CD4-positive, alpha-beta T cell (primary cell): ENCODE measurements at regions of chr13 and their contacts with region 1.

Region 1: GRCh38 chr13:28138012-28138755 is at the start of gene PAN3:
- DNase-seq: peak; percentile 85 to 97 (median 91)
- ATAC-seq: peak; percentile 50
- H3K4me3 ChIP-seq: peak within 1 kb of the TSS; percentile 81
- H3K4me3 Mint-ChIP-seq: peak within 1 kb of the TSS; percentile 95
- H3K27ac ChIP-seq: peak within 1 kb of the TSS; percentile 93 to 99
- H3K27ac Mint-ChIP-seq: peak within 1 kb of the TSS; percentile 99
- H3K4me1 ChIP-seq: peaks cover 37% of the 10 kb centered on the region
- H3K4me1 Mint-ChIP-seq: peaks cover 53% of the 10 kb centered on the region
- H3K27me3 ChIP-seq: no peaks in the 10 kb centered on the region
- H3K27me3 Mint-ChIP-seq: no peaks in the 10 kb centered on the region
- CTCF ChIP-seq: no peak
- total RNA-seq, gene PAN3: 56.9 to 59.5 TPM

Region 2: DNA sequence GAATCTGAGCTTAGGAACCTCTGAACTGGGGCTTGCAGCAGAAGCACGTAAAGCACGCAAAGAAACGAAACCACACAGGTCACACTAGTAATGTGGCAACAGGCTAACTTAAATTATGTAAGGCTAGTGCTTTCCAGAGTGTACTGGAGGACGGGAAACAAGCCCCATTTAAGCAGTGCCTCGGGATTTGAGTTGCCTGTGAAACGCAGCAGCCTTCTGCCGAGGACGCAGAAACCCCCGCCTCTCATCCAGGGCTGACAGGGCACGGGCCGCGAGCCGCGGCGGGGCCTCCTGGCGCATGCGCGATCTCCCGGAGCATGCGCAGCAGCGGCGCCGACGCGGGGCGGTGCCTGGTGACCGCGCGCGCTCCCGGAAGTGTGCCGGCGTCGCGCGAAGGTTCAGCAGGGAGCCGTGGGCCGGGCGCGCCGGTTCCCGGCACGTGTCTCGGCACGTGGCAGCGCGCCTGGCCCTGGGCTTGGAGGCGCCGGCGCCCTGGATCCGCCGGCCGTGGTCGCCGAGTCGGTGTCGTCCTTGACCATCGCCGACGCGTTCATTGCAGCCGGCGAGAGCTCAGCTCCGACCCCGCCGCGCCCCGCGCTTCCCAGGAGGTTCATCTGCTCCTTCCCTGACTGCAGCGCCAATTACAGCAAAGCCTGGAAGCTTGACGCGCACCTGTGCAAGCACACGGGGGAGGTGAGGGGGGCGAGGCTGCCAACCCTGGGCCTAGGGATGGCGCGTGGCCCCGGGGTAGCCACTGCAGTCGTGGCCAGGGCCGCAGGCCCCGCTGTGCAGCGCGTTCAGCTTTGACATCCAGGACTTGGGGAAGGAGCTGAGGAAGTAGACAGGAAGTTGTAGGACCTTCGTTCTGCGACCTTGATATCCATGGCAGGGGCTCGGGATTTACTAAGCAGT is 713.7 kb before region 1 on chr13 and contains the start of gene GTF3A:
- CTCF ChIA-PET with region 1: no interaction called
- POLR2A ChIA-PET with region 1: interaction called, 4 read pairs
- intact Hi-C with region 1: loop called in 1 of 2 experiments (anchors 10 kb)
- DNase-seq: peak; percentile 69 to 97 (median 87)
- ATAC-seq: peak; percentile 53
- H3K4me3 ChIP-seq: peak within 1 kb of the TSS; percentile 79
- H3K4me3 Mint-ChIP-seq: peak within 1 kb of the TSS; percentile 90
- H3K27ac ChIP-seq: peak within 1 kb of the TSS; percentile 91 to 95
- H3K27ac Mint-ChIP-seq: peak within 1 kb of the TSS; percentile 95
- H3K4me1 ChIP-seq: peaks cover 50% of the 10 kb centered on the region
- H3K4me1 Mint-ChIP-seq: peaks cover 39% of the 10 kb centered on the region
- H3K27me3 ChIP-seq: no peaks in the 10 kb centered on the region
- H3K27me3 Mint-ChIP-seq: no peaks in the 10 kb centered on the region
- CTCF ChIP-seq: no peak
- total RNA-seq, gene GTF3A: 129 to 132 TPM

Region 3: GRCh38 chr13:28179974-28180373 is 41.8 kb after region 1 on chr13:
- CTCF ChIA-PET with region 1: no interaction called
- POLR2A ChIA-PET with region 1: interaction called, 4 read pairs
- intact Hi-C with region 1: loop called (anchors 5 kb)
- DNase-seq: no peak
- ATAC-seq: no peak
- H3K4me3 ChIP-seq: no peak overlapping the region
- H3K4me3 Mint-ChIP-seq: no peak overlapping the region
- H3K27ac ChIP-seq: no peak overlapping the region
- H3K27ac Mint-ChIP-seq: peak overlapping the region; percentile 11
- H3K4me1 ChIP-seq: no peaks in the 10 kb centered on the region
- H3K4me1 Mint-ChIP-seq: peaks cover 52% of the 10 kb centered on the region
- H3K27me3 ChIP-seq: no peaks in the 10 kb centered on the region
- H3K27me3 Mint-ChIP-seq: no peaks in the 10 kb centered on the region
- CTCF ChIP-seq: no peak

Region 4: DNA sequence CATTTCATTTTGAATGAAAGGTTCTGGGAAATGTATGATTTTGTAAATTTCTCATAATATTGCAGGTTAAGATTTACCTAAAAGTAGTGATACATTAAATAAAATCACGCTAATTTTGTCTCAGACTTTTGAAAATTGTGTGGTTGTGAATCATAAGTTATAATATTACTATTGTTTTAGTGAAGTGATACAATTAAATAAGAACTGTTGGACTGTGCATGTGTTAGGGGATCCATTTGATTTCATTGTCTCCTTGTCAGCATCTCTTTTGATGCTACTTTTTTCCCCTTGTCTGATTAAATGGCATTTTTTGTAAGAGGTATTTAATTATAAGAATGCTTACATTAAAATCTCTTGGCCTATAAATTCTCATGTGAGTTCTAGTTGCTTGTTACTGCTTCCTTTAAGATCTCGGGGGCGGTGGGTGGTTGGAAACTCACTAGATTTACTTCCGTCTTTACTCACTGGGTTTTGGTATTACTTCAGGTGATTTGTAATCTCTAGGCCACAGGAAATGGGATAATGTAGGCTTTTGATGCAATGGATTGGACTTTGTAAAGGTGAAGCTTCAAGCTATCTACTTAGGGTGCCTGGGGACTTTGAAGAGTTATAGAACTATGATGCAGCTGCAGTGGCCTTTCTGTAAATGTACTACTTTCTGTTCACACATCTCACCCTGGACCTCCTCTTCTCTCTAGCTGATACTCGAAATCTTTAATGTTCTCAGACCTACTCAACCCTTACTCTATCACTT is 66.7 kb after region 1 on chr13:
- CTCF ChIA-PET with region 1: no interaction called
- POLR2A ChIA-PET with region 1: interaction called, 3 read pairs
- intact Hi-C with region 1: loop called in 1 of 2 experiments (anchors 5 kb)
- DNase-seq: no peak
- ATAC-seq: no peak
- H3K4me3 ChIP-seq: no peak overlapping the region
- H3K4me3 Mint-ChIP-seq: no peak overlapping the region
- H3K27ac ChIP-seq: no peak overlapping the region
- H3K27ac Mint-ChIP-seq: no peak overlapping the region
- H3K4me1 ChIP-seq: peaks cover 13% of the 10 kb centered on the region
- H3K4me1 Mint-ChIP-seq: peaks cover 45% of the 10 kb centered on the region
- H3K27me3 ChIP-seq: no peaks in the 10 kb centered on the region
- H3K27me3 Mint-ChIP-seq: no peaks in the 10 kb centered on the region
- CTCF ChIP-seq: no peak

Region 5: DNA sequence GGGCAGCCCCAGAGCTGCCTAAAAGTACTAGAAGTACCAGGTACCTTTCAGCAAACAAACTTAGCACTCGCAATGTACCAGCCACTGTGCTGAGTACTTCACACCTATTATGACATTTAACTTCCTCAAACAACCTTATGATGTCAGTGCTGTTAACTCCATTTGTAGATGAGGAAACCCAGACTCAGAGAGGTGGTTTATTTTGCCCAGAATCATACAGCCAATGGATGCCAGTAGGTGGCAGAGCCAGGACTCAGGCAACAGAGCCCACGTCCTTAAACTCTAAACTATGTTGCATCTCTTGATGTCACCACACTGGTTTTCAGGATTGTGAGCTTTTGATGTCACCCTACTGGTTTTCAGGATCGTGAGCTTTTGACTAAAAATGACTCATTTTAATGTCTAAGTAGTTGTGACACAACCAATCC is 277.8 kb after region 1 on chr13:
- CTCF ChIA-PET with region 1: no interaction called
- POLR2A ChIA-PET with region 1: no interaction called
- intact Hi-C with region 1: no loop called
- DNase-seq: peak in 2 of 14 experiments; percentile 28 to 45
- ATAC-seq: no peak
- H3K4me3 ChIP-seq: no peak overlapping the region
- H3K4me3 Mint-ChIP-seq: no peak overlapping the region
- H3K27ac ChIP-seq: no peak overlapping the region
- H3K27ac Mint-ChIP-seq: no peak overlapping the region
- H3K4me1 ChIP-seq: no peaks in the 10 kb centered on the region
- H3K4me1 Mint-ChIP-seq: no peaks in the 10 kb centered on the region
- H3K27me3 ChIP-seq: no peaks in the 10 kb centered on the region
- H3K27me3 Mint-ChIP-seq: no peaks in the 10 kb centered on the region
- CTCF ChIP-seq: no peak

Region 6: GRCh38 chr13:28658796-28659620 is 520.8 kb after region 1 on chr13 and contains the start of gene POMP:
- CTCF ChIA-PET with region 1: no interaction called
- POLR2A ChIA-PET with region 1: interaction called, 5 read pairs
- intact Hi-C with region 1: loop called (anchors 5 kb)
- DNase-seq: peak; percentile 86 to 95 (median 89)
- ATAC-seq: peak; percentile 84
- H3K4me3 ChIP-seq: peak within 1 kb of the TSS; percentile 84
- H3K4me3 Mint-ChIP-seq: peak within 1 kb of the TSS; percentile 98
- H3K27ac ChIP-seq: peak within 1 kb of the TSS; percentile 92 to 95
- H3K27ac Mint-ChIP-seq: peak within 1 kb of the TSS; percentile 99
- H3K4me1 ChIP-seq: peaks cover 27% of the 10 kb centered on the region
- H3K4me1 Mint-ChIP-seq: peaks cover 72% of the 10 kb centered on the region
- H3K27me3 ChIP-seq: no peaks in the 10 kb centered on the region
- H3K27me3 Mint-ChIP-seq: no peaks in the 10 kb centered on the region
- CTCF ChIP-seq: no peak
- total RNA-seq, gene POMP: 25.8 to 28.5 TPM